Calu3 (cell line): ENCODE measurements at regions of chr6 and their contacts with region 1.

Region 1: DNA sequence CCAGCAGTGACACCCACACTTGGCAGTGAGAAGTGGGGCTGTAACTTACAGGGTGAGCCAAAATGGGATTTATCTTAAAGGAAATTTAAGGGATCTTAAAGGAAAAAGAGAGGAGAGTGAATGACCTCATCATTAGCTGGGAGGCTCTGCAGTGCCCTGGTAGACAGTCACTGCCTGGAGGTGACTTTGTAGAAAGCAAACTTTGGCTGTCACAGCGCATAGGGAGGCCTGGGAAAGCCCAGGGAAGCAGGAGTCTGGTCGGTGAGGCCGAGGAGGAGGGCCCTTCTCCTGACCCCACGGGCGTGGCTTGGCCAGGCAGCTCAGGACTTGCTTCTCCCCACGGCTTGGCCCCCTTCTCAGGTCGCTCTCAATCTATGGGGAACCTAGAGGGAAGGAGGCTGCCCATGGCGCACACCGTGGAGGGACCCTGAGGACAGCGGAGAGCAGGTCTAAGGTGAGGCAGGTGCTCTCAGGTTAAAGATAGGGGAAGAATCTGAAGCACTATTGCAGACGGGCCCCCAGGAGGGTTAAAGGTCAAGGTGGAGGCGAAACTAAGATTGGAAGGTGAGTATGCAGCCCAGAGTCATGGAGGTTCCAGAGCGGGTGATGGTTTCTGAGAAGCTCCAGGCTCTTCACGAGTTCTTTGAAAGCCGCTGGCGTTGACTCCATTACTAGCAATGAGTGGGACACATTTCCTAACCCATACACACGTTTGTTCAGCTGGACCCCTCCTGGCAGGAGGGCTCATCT is 15.6 kb upstream of the RIPK1 start:
- DNase-seq: no peak
- H3K4me3 Mint-ChIP-seq: peak overlapping the region; percentile 69
- H3K27ac Mint-ChIP-seq: no peak overlapping the region
- H3K4me1 Mint-ChIP-seq: peaks cover 10% of the 10 kb centered on the region
- H3K27me3 Mint-ChIP-seq: peaks cover 20% of the 10 kb centered on the region
- CTCF ChIP-seq: no peak

Region 2: GRCh38 chr6:2111162-2111677 is 941.4 kb before region 1 on chr6:
- CTCF ChIA-PET with region 1: no interaction called
- intact Hi-C with region 1: no loop called
- DNase-seq: no peak
- H3K4me3 Mint-ChIP-seq: no peak overlapping the region
- H3K27ac Mint-ChIP-seq: no peak overlapping the region
- H3K4me1 Mint-ChIP-seq: peaks cover 23% of the 10 kb centered on the region
- H3K27me3 Mint-ChIP-seq: no peaks in the 10 kb centered on the region
- CTCF ChIP-seq: no peak

Region 3: DNA sequence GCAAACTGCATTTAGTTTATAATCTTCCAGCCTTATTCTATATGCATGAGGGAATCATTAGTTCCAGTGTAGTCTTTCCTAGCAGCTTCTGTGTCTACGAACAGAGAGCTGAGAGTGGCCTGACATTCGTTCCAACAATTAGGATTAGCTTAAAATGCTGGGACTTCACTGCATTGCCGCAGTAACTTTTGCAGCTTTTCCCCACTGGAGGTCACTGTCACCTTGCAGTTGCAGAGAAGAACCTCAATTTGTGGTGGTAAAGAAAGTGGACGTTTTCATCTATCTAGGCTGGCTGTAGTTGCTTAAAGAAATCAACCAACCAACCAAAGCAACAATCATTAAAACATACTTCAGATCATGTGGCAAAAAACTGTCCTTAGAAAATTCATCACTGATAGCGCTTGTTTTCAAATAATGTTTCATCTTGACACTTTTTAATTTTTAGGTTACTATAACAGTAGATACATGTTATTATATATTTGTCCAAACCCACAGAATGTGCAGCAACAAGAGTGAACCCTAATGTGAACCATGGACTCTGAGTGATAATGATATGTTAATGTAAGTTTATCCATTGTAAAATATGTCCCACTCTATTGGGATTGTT is 314.2 kb before region 1 on chr6:
- CTCF ChIA-PET with region 1: no interaction called
- intact Hi-C with region 1: loop called (anchors 10 kb)
- DNase-seq: peak; percentile 64
- H3K4me3 Mint-ChIP-seq: no peak overlapping the region
- H3K27ac Mint-ChIP-seq: no peak overlapping the region
- H3K4me1 Mint-ChIP-seq: no peaks in the 10 kb centered on the region
- H3K27me3 Mint-ChIP-seq: no peaks in the 10 kb centered on the region
- CTCF ChIP-seq: peak; percentile 50

Region 4: DNA sequence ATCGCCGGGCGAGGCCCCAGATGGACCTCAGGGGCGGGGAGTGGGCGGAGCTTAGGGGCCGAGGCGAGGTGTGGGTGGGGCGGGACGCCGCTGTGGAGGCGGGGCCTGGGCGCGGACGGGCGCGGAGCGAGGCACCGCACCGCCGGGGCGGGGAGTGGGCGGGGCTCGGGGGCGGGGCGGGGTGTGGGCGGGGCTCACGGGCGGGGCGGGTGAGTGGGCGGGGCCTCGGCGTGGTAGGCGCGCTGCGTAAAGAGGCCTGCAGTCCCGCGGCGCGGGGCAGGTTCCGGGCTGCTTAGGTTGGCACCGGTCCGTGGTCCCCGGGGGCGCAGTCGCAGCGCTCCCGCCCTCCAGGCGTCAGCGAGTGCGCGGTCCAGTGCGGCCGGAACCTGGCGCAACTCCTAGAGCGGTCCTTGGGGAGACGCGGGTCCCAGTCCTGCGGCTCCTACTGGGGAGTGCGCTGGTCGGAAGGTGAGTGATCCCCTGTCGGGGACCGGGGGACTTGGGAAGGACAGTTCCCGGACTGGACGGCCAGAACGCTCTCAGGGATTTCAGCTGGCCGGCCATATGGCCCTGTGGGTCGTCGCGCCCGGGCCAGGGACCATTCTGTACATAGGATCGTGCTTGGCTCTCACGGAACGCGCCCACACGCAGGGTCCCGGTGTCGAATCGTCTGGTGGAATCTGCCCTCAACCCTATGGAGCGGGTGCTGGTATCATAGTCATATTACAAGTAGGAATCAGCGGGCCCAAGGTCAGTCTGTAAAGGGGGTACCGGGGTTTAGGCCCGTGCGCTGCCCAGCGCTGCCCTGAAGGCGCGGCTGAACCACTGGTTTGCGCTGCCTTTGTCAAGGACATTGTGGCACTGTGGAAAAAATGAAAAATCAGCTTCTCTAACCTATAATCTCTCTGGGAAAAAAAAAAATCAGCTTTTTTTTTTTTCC is 52.8 kb before region 1 on chr6 and contains the start of gene NQO2:
- CTCF ChIA-PET with region 1: interaction called, 7 read pairs
- intact Hi-C with region 1: loop called (anchors 2 kb)
- DNase-seq: peak; percentile 89
- H3K4me3 Mint-ChIP-seq: peak within 1 kb of the TSS; percentile 86
- H3K27ac Mint-ChIP-seq: no peak within 1 kb of the TSS
- H3K4me1 Mint-ChIP-seq: no peaks in the 10 kb centered on the region
- H3K27me3 Mint-ChIP-seq: no peaks in the 10 kb centered on the region
- CTCF ChIP-seq: no peak
- total RNA-seq, gene NQO2: 11.5 and 12.0 TPM in 2 replicates

Region 5: DNA sequence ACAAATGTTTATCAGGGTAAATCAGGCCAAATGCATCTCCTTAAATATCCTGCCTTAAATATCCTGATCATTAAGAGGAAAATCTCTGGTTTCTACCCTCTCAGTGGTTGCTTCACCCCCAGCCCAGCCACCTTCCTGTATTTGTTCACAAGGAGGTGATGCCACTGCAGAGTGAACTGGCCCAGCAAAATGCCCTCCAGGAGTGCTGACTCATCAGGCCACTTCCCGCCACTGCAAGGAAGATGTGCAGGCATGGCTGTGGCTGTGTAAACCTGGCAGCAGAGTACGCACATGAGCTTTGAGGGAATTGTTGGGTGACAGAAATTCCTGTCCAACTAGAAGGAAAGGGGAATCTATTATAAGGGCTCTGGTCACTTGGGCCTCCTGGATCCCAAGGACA is 39.2 kb before region 1 on chr6:
- CTCF ChIA-PET with region 1: no interaction called
- intact Hi-C with region 1: no loop called
- DNase-seq: no peak
- H3K4me3 Mint-ChIP-seq: no peak overlapping the region
- H3K27ac Mint-ChIP-seq: no peak overlapping the region
- H3K4me1 Mint-ChIP-seq: no peaks in the 10 kb centered on the region
- H3K27me3 Mint-ChIP-seq: no peaks in the 10 kb centered on the region
- CTCF ChIP-seq: no peak